ENCODE measurements at regions of chr9 and their contacts with region 1.

Region 1: DNA sequence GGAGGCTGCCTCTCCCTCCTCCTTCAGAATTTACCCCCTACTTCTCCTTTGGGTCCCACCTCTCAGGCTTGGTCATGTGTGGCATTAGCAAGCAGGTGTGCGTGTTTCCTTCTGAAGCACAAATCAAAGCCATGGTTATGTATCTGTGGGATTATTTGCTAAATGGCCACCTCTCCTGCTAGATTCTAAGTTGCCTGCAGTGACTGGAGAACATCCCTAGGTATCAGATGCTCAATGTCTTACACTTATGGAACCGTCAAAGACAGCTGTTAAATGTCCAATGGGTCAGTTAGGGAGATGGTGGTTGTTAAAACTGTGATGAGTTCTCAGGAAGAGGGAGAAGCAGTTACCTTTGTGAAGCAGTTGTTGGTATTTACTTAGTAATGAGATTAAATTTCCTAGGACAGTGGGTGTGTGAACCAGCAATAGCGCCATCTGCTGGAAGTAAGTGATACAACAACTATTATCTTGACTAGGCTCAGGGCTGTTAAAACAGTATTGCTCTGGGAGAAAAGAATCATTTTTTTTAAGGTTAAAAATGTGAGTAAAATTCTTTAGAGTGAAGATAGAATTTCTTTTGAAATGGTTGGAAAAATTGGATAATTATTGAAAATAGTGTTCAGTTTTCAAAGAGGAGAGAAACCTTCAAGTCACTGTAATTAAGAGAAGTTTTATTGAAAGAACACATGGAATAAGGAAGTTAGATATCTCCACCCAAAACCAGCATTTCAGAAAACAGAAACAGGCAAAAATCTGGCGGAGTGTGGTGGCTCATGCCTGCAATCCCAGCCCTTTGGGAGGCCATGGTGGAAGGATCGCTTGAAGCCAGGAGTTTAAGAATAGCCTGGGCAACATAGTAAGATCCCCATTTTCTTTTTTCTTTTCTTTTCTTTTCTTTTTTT is 71.3 kb downstream of the TMC1 start:
- DNase-seq: peak in 8 of 14 experiments; percentile 2 to 80 (median 34)
- ATAC-seq: peak; percentile 80
- H3K4me3 ChIP-seq: no peak overlapping the region
- H3K4me3 Mint-ChIP-seq: no peak overlapping the region
- H3K27ac ChIP-seq: no peak overlapping the region
- H3K27ac Mint-ChIP-seq: no peak overlapping the region
- H3K4me1 ChIP-seq: no peaks in the 10 kb centered on the region
- H3K4me1 Mint-ChIP-seq: peaks cover 4% of the 10 kb centered on the region
- H3K27me3 ChIP-seq: no peaks in the 10 kb centered on the region
- H3K27me3 Mint-ChIP-seq: peaks cover 4% of the 10 kb centered on the region
- CTCF ChIP-seq: peak; percentile 95

Region 2: GRCh38 chr9:72292256-72292682 is 300.5 kb before region 1 on chr9:
- CTCF ChIA-PET with region 1: interaction called, 5 read pairs
- POLR2A ChIA-PET with region 1: no interaction called
- intact Hi-C with region 1: loop called (anchors 1 kb)
- DNase-seq: peak in 3 of 14 experiments; percentile 43 to 55 (median 51)
- ATAC-seq: no peak
- H3K4me3 ChIP-seq: no peak overlapping the region
- H3K4me3 Mint-ChIP-seq: no peak overlapping the region
- H3K27ac ChIP-seq: no peak overlapping the region
- H3K27ac Mint-ChIP-seq: no peak overlapping the region
- H3K4me1 ChIP-seq: no peaks in the 10 kb centered on the region
- H3K4me1 Mint-ChIP-seq: no peaks in the 10 kb centered on the region
- H3K27me3 ChIP-seq: no peaks in the 10 kb centered on the region
- H3K27me3 Mint-ChIP-seq: peaks cover 10% of the 10 kb centered on the region
- CTCF ChIP-seq: peak; percentile 68

Region 3: DNA sequence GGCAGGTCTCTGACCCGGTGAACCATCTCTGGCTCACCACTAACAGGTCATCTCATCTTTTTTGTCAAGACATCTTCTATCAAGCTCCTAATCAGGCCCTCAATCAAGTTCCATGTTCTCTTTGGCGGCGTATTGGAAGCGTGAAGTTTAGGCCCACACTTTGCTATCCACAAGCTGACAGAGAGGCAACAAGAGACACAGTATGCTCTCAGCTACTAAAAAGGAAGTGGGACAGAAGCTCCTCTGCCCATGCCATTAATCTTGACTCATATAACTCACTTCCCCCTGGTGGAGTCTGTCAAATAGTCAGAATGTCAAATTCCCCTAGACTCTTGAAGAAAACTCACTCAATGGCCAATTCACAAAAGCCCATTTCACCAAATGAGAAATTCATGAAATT is 148.9 kb before region 1 on chr9:
- CTCF ChIA-PET with region 1: no interaction called
- POLR2A ChIA-PET with region 1: no interaction called
- intact Hi-C with region 1: loop called in 1 of 2 experiments (anchors 5 kb)
- DNase-seq: peak in 4 of 14 experiments; percentile 21 to 65 (median 52)
- ATAC-seq: peak; percentile 56
- H3K4me3 ChIP-seq: no peak overlapping the region
- H3K4me3 Mint-ChIP-seq: no peak overlapping the region
- H3K27ac ChIP-seq: no peak overlapping the region
- H3K27ac Mint-ChIP-seq: peak overlapping the region; percentile 31
- H3K4me1 ChIP-seq: peaks cover 13% of the 10 kb centered on the region
- H3K4me1 Mint-ChIP-seq: peaks cover 24% of the 10 kb centered on the region
- H3K27me3 ChIP-seq: no peaks in the 10 kb centered on the region
- H3K27me3 Mint-ChIP-seq: no peaks in the 10 kb centered on the region
- CTCF ChIP-seq: no peak

Region 4: DNA sequence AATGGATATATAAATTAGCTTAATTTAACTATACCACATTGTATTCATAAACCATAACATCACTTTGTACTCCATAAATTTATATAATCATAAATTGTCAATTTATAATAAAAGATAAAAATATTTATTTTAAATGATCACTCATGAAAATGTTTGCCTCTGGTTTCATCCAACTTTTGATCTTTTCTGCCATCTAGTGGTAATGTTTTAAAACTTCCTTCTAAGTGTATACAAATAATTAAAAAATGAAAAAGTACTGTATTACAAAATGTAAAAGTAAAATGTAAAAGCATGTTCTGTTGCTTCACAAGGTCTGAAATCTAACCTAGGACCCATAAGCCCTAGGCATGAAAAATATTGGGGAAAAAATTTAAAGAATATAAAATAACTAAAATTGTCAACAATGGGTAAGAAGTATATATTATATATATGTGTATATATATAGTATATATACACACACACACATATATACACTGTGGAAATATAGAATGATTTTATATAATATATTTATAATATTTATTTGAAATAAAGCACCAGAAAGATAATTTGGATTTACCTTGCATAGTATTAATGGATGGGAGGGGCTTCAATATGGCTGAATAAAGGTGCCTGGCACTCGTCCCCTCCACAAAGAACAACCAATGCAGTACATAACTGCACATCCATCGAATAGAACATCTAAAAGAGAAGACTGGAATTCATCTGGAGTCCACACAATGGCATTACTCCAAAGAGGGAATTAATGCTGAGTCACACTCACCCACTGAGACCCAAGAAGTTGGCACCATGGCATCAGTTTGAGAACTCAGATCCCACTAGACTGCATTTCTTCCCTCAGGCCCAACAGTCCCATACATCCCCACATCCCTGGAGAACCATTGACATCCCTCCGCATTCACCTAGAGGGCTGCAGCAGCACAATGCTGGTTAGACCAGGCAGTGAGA is 591.4 kb after region 1 on chr9:
- CTCF ChIA-PET with region 1: no interaction called
- POLR2A ChIA-PET with region 1: no interaction called
- intact Hi-C with region 1: loop called in 1 of 2 experiments (anchors 10 kb)
- DNase-seq: peak in 3 of 14 experiments; percentile 71 to 75 (median 74)
- ATAC-seq: no peak
- H3K4me3 ChIP-seq: no peak overlapping the region
- H3K4me3 Mint-ChIP-seq: no peak overlapping the region
- H3K27ac ChIP-seq: no peak overlapping the region
- H3K27ac Mint-ChIP-seq: no peak overlapping the region
- H3K4me1 ChIP-seq: no peaks in the 10 kb centered on the region
- H3K4me1 Mint-ChIP-seq: no peaks in the 10 kb centered on the region
- H3K27me3 ChIP-seq: peaks cover 3 to 21% of the 10 kb centered on the region in 2 experiments
- H3K27me3 Mint-ChIP-seq: peaks cover 11% of the 10 kb centered on the region
- CTCF ChIP-seq: peak; percentile 78